ENCODE measurements at regions of chr16 and their contacts with region 1.

Region 1: GRCh38 chr16:71961066-71962039 is 38.8 kb downstream of the PKD1L3 start:
- DNase-seq: peak; percentile 87
- ATAC-seq: peak; percentile 98
- H3K4me3 Mint-ChIP-seq: no peak overlapping the region
- H3K27ac Mint-ChIP-seq: no peak overlapping the region
- H3K4me1 Mint-ChIP-seq: no peaks in the 10 kb centered on the region
- H3K27me3 Mint-ChIP-seq: no peaks in the 10 kb centered on the region; the same call in 1 of the 2 replicates
- CTCF ChIP-seq: peak; percentile 78

Region 2: GRCh38 chr16:71883849-71884638 is 77.3 kb before region 1 on chr16 and contains the start of gene ZNF821:
- CTCF ChIA-PET with region 1: interaction called, 25 read pairs
- POLR2A ChIA-PET with region 1: no interaction called
- DNase-seq: peak; percentile 93
- ATAC-seq: peak; percentile 92
- H3K4me3 Mint-ChIP-seq: peak within 1 kb of the TSS; percentile 92
- H3K27ac Mint-ChIP-seq: peak within 1 kb of the TSS; percentile 96
- H3K4me1 Mint-ChIP-seq: peaks cover 37% of the 10 kb centered on the region
- H3K27me3 Mint-ChIP-seq: no peaks in the 10 kb centered on the region
- CTCF ChIP-seq: no peak
- total RNA-seq, gene ZNF821: 14.1 to 16.2 TPM (median 15.4 TPM) in 3 replicates

Region 3: DNA sequence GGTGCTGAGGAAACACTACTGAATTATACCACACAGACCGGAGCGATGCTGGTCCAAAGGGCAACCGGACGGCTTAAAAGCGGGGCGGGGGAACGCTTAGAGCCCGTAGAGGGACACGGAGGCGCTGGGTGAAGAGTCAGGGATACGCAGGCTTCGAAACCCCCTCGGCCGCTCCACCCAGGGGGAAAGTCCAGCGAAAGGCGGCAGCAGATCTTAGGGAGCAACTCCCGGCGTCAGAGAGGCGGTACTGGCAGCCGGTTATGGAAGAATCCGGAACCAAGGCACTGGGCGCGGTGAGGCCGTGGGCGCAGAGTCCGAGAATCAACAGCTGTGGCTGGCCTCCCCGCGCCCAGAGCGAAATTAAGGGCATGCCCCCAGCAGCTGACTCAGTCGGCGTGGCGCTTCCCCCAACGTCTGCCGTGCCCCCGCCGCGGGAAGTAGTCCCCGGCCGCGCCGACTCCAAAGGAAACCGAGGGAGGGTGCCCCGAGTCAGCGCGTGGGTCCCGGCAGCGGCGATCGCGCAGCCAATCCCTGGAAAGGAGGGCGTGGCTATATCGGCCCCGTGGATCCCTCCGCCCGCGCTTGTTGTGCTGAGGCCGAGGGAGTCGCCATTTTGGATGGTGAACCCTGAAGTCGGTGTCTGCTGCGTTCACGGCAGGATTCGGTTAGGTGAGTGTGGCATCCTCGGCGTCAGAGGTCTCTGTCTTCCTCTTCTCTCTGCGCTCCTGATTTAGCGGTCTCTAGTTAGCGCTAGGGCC is 66.3 kb before region 1 on chr16 and contains the start of gene IST1:
- CTCF ChIA-PET with region 1: interaction called, 11 read pairs
- POLR2A ChIA-PET with region 1: interaction called, 7 read pairs
- DNase-seq: peak; percentile 97
- ATAC-seq: peak; percentile 80
- H3K4me3 Mint-ChIP-seq: peak within 1 kb of the TSS; percentile 98
- H3K27ac Mint-ChIP-seq: peak within 1 kb of the TSS; percentile 97
- H3K4me1 Mint-ChIP-seq: peaks cover 24% of the 10 kb centered on the region
- H3K27me3 Mint-ChIP-seq: no peaks in the 10 kb centered on the region
- CTCF ChIP-seq: no peak
- total RNA-seq, gene IST1: 255 to 272 TPM (median 268 TPM) in 3 replicates

Region 4: DNA sequence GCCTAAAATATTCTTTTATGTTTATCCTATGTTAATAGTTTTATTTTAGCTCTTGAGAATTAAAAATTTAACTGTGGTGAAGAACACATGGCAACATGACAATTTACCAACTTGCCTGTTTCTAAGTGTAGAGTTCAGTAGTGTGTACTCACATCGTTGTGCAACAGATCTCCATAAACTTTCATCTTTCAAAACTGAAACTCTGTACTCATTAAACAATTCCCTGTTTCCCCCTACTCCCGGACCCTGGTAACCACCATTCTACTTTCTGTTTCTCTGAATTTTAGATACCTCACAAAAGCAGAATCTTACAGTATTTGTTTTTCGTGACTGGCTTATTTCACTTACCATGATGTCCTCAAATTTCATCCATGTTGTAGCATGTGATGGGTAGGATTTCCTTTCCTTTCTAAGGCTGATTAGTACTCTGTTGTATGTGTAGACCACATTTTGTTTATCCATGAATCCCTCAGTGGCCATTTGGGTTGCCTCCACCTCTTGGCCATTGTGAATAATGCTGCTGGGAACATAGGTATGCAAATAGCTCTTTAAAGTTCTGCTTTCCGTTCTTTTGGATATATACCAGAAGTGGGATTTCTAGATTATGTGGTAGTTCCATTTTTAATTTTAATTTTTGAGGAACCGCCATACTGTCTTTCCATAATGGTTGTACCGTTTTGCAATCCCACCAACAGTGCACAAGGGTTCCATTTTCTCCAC is 48.7 kb before region 1 on chr16:
- CTCF ChIA-PET with region 1: interaction called, 11 read pairs
- POLR2A ChIA-PET with region 1: interaction called, 6 read pairs
- DNase-seq: no peak
- ATAC-seq: no peak
- H3K4me3 Mint-ChIP-seq: no peak overlapping the region; the same call in 1 of the 2 replicates
- H3K27ac Mint-ChIP-seq: peak overlapping the region; percentile 57
- H3K4me1 Mint-ChIP-seq: peaks cover 37% of the 10 kb centered on the region
- H3K27me3 Mint-ChIP-seq: no peaks in the 10 kb centered on the region
- CTCF ChIP-seq: no peak

Region 5: DNA sequence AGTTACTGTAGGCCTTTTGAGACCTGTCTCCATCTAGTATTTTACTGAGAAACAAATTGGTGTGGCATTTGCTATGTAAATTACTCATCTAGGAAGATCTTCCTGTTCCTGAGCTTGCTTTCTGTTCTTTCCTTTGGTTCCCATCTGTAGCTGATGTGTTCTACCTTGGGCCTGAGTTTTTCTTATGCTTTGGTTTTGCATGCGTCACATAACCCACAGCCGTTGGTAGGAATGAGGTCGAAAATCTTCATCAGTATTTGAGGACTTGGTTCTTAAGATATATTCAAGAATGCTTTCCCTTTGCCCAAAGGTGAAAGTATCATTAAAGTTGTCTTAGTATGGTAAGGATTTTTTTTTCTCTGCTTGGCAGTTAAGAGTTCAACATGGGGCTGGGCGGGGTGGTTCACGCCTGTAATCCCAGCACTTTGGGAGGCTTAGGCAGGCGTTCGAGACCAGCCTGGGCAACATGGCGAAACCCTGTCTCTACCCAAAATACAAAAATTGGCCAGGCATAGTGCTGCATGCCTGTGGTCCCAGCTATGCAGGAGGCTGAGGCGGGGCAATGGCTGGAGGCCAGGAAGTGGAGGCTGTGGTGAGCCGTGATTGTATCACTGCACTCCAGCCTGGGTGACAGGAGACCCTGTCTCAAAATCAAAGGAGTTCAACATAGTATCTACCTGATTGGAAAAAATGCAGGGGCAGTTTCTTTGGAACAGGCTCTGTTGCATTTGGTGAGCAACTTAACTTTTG is 37.2 kb before region 1 on chr16:
- CTCF ChIA-PET with region 1: interaction called, 10 read pairs
- POLR2A ChIA-PET with region 1: interaction called, 3 read pairs
- DNase-seq: no peak
- ATAC-seq: no peak
- H3K4me3 Mint-ChIP-seq: no peak overlapping the region
- H3K27ac Mint-ChIP-seq: no peak overlapping the region
- H3K4me1 Mint-ChIP-seq: no peaks in the 10 kb centered on the region
- H3K27me3 Mint-ChIP-seq: no peaks in the 10 kb centered on the region
- CTCF ChIP-seq: no peak

Region 6: GRCh38 chr16:71937868-71938510 is 23.4 kb before region 1 on chr16:
- CTCF ChIA-PET with region 1: interaction called, 27 read pairs
- POLR2A ChIA-PET with region 1: no interaction called
- DNase-seq: peak; percentile 13
- ATAC-seq: peak; percentile 53
- H3K4me3 Mint-ChIP-seq: no peak overlapping the region
- H3K27ac Mint-ChIP-seq: no peak overlapping the region
- H3K4me1 Mint-ChIP-seq: peaks cover 9% of the 10 kb centered on the region
- H3K27me3 Mint-ChIP-seq: peaks cover 3% of the 10 kb centered on the region; the same call in 1 of the 2 replicates
- CTCF ChIP-seq: no peak

Region 7: GRCh38 chr16:71973001-71973400 is 11.6 kb after region 1 on chr16:
- CTCF ChIA-PET with region 1: interaction called, 15 read pairs
- POLR2A ChIA-PET with region 1: no interaction called
- DNase-seq: no peak
- ATAC-seq: no peak
- H3K4me3 Mint-ChIP-seq: no peak overlapping the region
- H3K27ac Mint-ChIP-seq: no peak overlapping the region
- H3K4me1 Mint-ChIP-seq: no peaks in the 10 kb centered on the region
- H3K27me3 Mint-ChIP-seq: no peaks in the 10 kb centered on the region
- CTCF ChIP-seq: no peak